Pancreas (tissue), 10 donors: ENCODE measurements at regions of chrX and their contacts with region 1.

Region 1: GRCh38 chrX:2640275-2641150 is 50.6 kb upstream of the CD99 start:
- DNase-seq: no peak
- ATAC-seq: no peak
- H3K4me3 ChIP-seq: no peak overlapping the region
- H3K27ac ChIP-seq: no peak overlapping the region
- H3K4me1 ChIP-seq: no peaks in the 10 kb centered on the region
- H3K27me3 ChIP-seq: no peaks in the 10 kb centered on the region
- CTCF ChIP-seq: no peak

Region 2: DNA sequence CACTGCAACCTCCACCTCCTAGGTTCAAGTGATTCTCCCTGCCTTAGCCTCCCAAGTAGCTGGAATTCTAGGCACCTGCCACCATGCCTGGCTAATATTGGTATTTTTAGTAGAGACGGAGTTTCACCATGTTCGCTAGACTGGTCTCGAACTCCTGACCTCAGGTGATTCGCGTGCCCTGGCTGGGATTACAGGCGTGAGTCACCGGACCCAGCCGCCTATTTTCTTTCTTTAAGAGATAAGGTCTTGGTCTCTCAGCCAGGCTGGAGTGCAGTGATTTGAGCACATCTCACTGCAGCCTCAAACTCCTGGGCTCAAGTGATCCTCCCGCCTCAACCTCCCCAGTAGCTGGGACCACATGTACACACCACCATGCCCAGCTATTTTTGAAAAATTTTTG is 306.3 kb before region 1 on chrX:
- intact Hi-C with region 1: no loop called
- DNase-seq: no peak
- ATAC-seq: no peak
- H3K4me3 ChIP-seq: no peak overlapping the region
- H3K27ac ChIP-seq: no peak overlapping the region
- H3K4me1 ChIP-seq: no peaks in the 10 kb centered on the region
- H3K27me3 ChIP-seq: no peaks in the 10 kb centered on the region
- CTCF ChIP-seq: no peak

Region 3: GRCh38 chrX:2801223-2801622 is 160.7 kb after region 1 on chrX:
- intact Hi-C with region 1: loop called in 1 of 3 experiments (anchors 10 kb)
- DNase-seq: no peak
- ATAC-seq: no peak
- H3K4me3 ChIP-seq: no peak overlapping the region
- H3K27ac ChIP-seq: no peak overlapping the region
- H3K4me1 ChIP-seq: no peaks in the 10 kb centered on the region
- H3K27me3 ChIP-seq: no peaks in the 10 kb centered on the region
- CTCF ChIP-seq: no peak

Region 4: GRCh38 chrX:2819345-2820135 is 179.0 kb after region 1 on chrX:
- intact Hi-C with region 1: loop called in 1 of 3 experiments (anchors 10 kb)
- DNase-seq: no peak
- ATAC-seq: peak in 3 of 4 donors; percentile 64 to 91 (median 90)
- H3K4me3 ChIP-seq: no peak overlapping the region
- H3K27ac ChIP-seq: no peak overlapping the region
- H3K4me1 ChIP-seq: no peaks in the 10 kb centered on the region
- H3K27me3 ChIP-seq: no peaks in the 10 kb centered on the region
- CTCF ChIP-seq: peak; percentile 20 to 45 (median 38)